ENCODE measurements at regions of chr18 and their contacts with region 1.

Region 1: GRCh38 chr18:36284671-36285295 is 12.7 kb upstream of the FHOD3 start:
- DNase-seq: no peak
- ATAC-seq: peak; percentile 78
- H3K4me3 ChIP-seq: no peak overlapping the region
- H3K27ac ChIP-seq: no peak overlapping the region
- H3K4me1 ChIP-seq: no peaks in the 10 kb centered on the region
- H3K27me3 ChIP-seq: peaks cover 13% of the 10 kb centered on the region
- CTCF ChIP-seq: peak; percentile 88

Region 2: DNA sequence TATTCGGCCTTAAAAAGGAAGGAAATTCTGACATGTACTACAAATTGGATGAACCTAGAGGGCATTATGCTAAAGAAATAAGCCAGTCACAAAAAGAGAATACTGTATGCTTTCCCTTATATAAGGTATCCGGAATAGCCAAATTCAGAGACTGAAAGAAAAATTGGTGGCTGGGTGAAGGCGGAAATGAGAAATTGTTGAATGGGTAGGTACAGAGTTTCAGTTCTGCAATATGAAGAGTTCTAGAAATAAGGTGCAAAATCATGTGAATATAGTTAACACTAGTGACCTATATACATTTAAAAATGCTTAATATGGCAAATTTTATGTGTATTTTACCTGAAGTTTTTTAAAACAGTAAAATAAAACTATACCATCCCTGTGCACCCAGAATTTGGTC is 269.2 kb before region 1 on chr18:
- intact Hi-C with region 1: loop called (anchors 5 kb)
- DNase-seq: no peak
- ATAC-seq: no peak
- H3K4me3 ChIP-seq: no peak overlapping the region
- H3K27ac ChIP-seq: no peak overlapping the region
- H3K4me1 ChIP-seq: no peaks in the 10 kb centered on the region
- H3K27me3 ChIP-seq: no peaks in the 10 kb centered on the region
- CTCF ChIP-seq: no peak

Region 3: GRCh38 chr18:36095936-36096519 is 188.8 kb before region 1 on chr18:
- intact Hi-C with region 1: loop called (anchors 10 kb)
- DNase-seq: no peak
- ATAC-seq: peak; percentile 45
- H3K4me3 ChIP-seq: no peak overlapping the region
- H3K27ac ChIP-seq: no peak overlapping the region
- H3K4me1 ChIP-seq: no peaks in the 10 kb centered on the region
- H3K27me3 ChIP-seq: no peaks in the 10 kb centered on the region
- CTCF ChIP-seq: peak; percentile 58

Measured in upper lobe of right lung (tissue), 1 donor.